ENCODE measurements at regions of chr12 and their contacts with region 1.

Region 1: DNA sequence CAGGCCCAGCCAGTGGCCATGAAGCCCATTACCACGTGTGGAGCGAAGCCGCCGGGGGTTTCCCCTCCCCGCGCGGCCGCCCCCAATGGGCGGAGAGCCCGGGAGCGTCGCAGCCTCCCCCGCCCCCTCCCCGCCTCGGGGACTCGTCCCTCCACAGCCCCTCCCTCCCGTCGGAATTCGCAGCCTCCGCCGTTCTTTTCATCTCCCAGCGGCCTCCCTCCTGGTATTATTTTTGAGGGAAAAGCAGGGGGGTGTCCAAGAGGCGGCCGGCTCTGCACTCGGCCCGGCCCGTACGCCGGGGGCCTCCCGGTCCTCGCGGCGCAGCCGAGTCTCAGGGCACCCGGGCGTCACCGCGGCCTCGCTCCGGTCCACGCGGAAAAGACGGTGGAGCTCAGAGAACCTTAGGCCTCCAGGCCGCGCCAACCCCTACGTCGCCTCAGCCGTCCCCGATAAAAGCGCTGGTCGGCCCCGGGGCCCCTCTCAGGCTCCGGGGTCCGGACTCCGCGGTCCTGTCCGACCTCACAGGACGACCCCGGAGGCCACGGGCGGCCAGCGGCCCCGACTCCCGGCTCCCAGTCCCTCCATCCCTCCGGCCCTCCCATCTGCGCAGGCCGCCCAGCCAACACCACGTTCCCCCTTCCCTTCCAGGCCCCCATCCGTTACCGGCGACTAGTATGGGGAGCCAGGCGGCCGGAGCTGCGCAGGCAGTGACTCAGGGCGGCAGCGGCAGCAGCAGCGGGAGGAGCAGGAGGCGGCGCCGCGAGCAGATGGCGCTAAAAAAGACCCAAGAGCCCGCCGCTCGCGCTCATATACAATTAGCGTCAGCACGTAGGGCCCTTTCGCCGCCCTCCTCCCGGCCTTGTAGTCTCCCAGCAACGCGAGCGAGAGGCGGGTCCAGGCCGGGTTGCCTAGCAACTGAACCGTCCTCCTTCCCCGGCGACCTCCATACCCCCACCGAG is at the start of gene NAP1L1:
- DNase-seq: peak; percentile 94 to 98
- ATAC-seq: peak; percentile 78 to 92 (median 82)
- H3K4me3 ChIP-seq: peak within 1 kb of the TSS; percentile 82
- H3K4me3 Mint-ChIP-seq: peak within 1 kb of the TSS; percentile 98
- H3K27ac ChIP-seq: peak within 1 kb of the TSS; percentile 99
- H3K27ac Mint-ChIP-seq: peak within 1 kb of the TSS; percentile 96 to 99
- H3K4me1 ChIP-seq: peaks cover 11% of the 10 kb centered on the region
- H3K4me1 Mint-ChIP-seq: peaks cover 43 to 49% of the 10 kb centered on the region in 2 donors
- H3K27me3 ChIP-seq: no peaks in the 10 kb centered on the region
- H3K27me3 Mint-ChIP-seq: no peaks in the 10 kb centered on the region
- CTCF ChIP-seq: no peak
- total RNA-seq, gene NAP1L1: 264 to 431 (median 286) TPM

Region 2: GRCh38 chr12:75511116-75512048 is 572.8 kb before region 1 on chr12 and contains the start of gene KRR1:
- intact Hi-C with region 1: loop called (anchors 5 kb)
- DNase-seq: peak; percentile 75 to 98
- ATAC-seq: peak; percentile 96 to 97 (median 96)
- H3K4me3 ChIP-seq: peak within 1 kb of the TSS; percentile 81
- H3K4me3 Mint-ChIP-seq: peak within 1 kb of the TSS; percentile 99
- H3K27ac ChIP-seq: peak within 1 kb of the TSS; percentile 80
- H3K27ac Mint-ChIP-seq: peak within 1 kb of the TSS; percentile 98
- H3K4me1 ChIP-seq: peaks cover 4% of the 10 kb centered on the region
- H3K4me1 Mint-ChIP-seq: peaks cover 22 to 30% of the 10 kb centered on the region in 2 donors
- H3K27me3 ChIP-seq: peaks cover 2% of the 10 kb centered on the region
- H3K27me3 Mint-ChIP-seq: no peaks in the 10 kb centered on the region
- CTCF ChIP-seq: no peak
- total RNA-seq, gene KRR1: 101 to 112 (median 106) TPM

Region 3: GRCh38 chr12:75868501-75868900 is 215.7 kb before region 1 on chr12:
- intact Hi-C with region 1: no loop called
- DNase-seq: no peak
- ATAC-seq: no peak
- H3K4me3 ChIP-seq: no peak overlapping the region
- H3K4me3 Mint-ChIP-seq: no peak overlapping the region
- H3K27ac ChIP-seq: no peak overlapping the region
- H3K27ac Mint-ChIP-seq: no peak overlapping the region
- H3K4me1 ChIP-seq: no peaks in the 10 kb centered on the region
- H3K4me1 Mint-ChIP-seq: peaks cover 0 to 8% of the 10 kb centered on the region in 2 donors
- H3K27me3 ChIP-seq: no peaks in the 10 kb centered on the region
- H3K27me3 Mint-ChIP-seq: peaks cover 11 to 12% of the 10 kb centered on the region in 2 donors
- CTCF ChIP-seq: no peak

Region 4: DNA sequence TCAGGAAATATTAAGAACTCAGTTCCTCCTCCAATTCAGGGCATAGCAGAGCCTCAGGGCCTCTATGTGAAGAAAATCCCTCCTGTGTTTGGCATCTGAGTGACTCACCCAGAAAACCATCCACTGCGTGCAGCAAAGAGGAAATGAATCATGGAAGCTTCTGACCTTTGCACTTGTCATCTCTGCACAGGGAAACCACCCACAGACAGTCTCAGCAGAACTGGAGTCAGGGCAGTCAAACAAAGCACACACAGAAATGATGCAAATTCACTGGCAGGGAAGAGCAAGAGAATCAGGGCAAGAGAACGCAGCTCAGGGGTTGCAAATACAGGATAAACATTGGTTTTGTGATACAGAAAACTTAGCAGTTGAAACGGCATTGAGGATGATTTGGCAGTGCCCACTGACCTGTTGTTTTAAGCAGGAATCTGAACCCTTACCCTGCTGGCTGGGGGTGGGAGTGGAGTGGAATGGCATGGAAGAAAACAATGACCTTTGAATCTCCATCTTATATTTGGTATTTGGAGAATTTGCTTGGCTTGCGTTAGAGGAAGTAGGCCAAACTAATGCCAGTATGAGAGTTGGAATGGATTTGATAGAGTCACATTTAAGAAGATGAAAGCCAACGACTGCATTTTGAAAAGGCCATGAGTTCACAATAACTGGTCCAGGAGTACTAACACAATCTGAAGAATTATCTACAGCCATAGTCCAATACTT is 106.1 kb before region 1 on chr12:
- intact Hi-C with region 1: loop called (anchors 1 kb)
- DNase-seq: peak; percentile 63 to 91
- ATAC-seq: peak; percentile 88 to 98 (median 97)
- H3K4me3 ChIP-seq: no peak overlapping the region
- H3K4me3 Mint-ChIP-seq: peak overlapping the region; percentile 17
- H3K27ac ChIP-seq: peak overlapping the region; percentile 93
- H3K27ac Mint-ChIP-seq: peak overlapping the region; percentile 88 to 94
- H3K4me1 ChIP-seq: peaks cover 24% of the 10 kb centered on the region
- H3K4me1 Mint-ChIP-seq: peaks cover 22 to 31% of the 10 kb centered on the region in 2 donors
- H3K27me3 ChIP-seq: no peaks in the 10 kb centered on the region
- H3K27me3 Mint-ChIP-seq: no peaks in the 10 kb centered on the region
- CTCF ChIP-seq: no peak

Region 5: DNA sequence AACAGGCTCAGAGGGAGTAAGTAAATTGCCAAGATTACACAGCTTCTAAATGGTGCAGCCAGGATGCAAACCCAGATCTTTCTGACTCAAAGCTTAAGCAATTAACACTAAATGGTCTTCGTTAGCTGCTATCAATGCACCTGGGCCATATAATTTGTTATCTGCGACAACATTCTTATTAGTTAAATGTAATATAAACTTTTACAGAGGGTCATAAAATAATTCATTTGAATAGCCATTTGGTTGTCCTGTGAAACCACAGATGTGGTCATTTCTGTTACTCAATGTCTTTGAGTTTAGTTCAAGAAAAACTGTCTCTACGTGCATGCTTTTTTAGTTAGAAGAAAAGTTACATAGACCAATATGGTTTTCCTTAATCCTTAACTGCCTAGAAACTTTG is 22.4 kb after region 1 on chr12:
- intact Hi-C with region 1: no loop called
- DNase-seq: no peak
- ATAC-seq: no peak
- H3K4me3 ChIP-seq: no peak overlapping the region
- H3K4me3 Mint-ChIP-seq: no peak overlapping the region
- H3K27ac ChIP-seq: no peak overlapping the region
- H3K27ac Mint-ChIP-seq: no peak overlapping the region
- H3K4me1 ChIP-seq: no peaks in the 10 kb centered on the region
- H3K4me1 Mint-ChIP-seq: no peaks in the 10 kb centered on the region
- H3K27me3 ChIP-seq: no peaks in the 10 kb centered on the region
- H3K27me3 Mint-ChIP-seq: peaks cover 0 to 4% of the 10 kb centered on the region in 2 donors
- CTCF ChIP-seq: no peak

Region 6: GRCh38 chr12:76158518-76159321 is 74.5 kb after region 1 on chr12:
- intact Hi-C with region 1: loop called (anchors 2 kb)
- DNase-seq: peak; percentile 61 to 75
- ATAC-seq: peak; percentile 93 to 98 (median 94)
- H3K4me3 ChIP-seq: peak overlapping the region; percentile 23
- H3K4me3 Mint-ChIP-seq: peak overlapping the region; percentile 83
- H3K27ac ChIP-seq: peak overlapping the region; percentile 46
- H3K27ac Mint-ChIP-seq: peak overlapping the region; percentile 78 to 92
- H3K4me1 ChIP-seq: peaks cover 5% of the 10 kb centered on the region
- H3K4me1 Mint-ChIP-seq: peaks cover 14 to 18% of the 10 kb centered on the region in 2 donors
- H3K27me3 ChIP-seq: no peaks in the 10 kb centered on the region
- H3K27me3 Mint-ChIP-seq: no peaks in the 10 kb centered on the region
- CTCF ChIP-seq: peak; percentile 41

Region 7: GRCh38 chr12:76348079-76348901 is 264.1 kb after region 1 on chr12 and contains the start of gene BBS10:
- intact Hi-C with region 1: loop called (anchors 5 kb)
- DNase-seq: peak; percentile 74 to 92
- ATAC-seq: peak; percentile 97 to 99 (median 97)
- H3K4me3 ChIP-seq: peak within 1 kb of the TSS; percentile 65
- H3K4me3 Mint-ChIP-seq: peak within 1 kb of the TSS; percentile 93
- H3K27ac ChIP-seq: peak within 1 kb of the TSS; percentile 89
- H3K27ac Mint-ChIP-seq: peak within 1 kb of the TSS; percentile 84 to 91
- H3K4me1 ChIP-seq: peaks cover 9% of the 10 kb centered on the region
- H3K4me1 Mint-ChIP-seq: peaks cover 19 to 20% of the 10 kb centered on the region in 2 donors
- H3K27me3 ChIP-seq: no peaks in the 10 kb centered on the region
- H3K27me3 Mint-ChIP-seq: no peaks in the 10 kb centered on the region
- CTCF ChIP-seq: peak; percentile 36
- total RNA-seq, gene BBS10: 2.8 to 4.0 (median 3.3) TPM

Region 8: DNA sequence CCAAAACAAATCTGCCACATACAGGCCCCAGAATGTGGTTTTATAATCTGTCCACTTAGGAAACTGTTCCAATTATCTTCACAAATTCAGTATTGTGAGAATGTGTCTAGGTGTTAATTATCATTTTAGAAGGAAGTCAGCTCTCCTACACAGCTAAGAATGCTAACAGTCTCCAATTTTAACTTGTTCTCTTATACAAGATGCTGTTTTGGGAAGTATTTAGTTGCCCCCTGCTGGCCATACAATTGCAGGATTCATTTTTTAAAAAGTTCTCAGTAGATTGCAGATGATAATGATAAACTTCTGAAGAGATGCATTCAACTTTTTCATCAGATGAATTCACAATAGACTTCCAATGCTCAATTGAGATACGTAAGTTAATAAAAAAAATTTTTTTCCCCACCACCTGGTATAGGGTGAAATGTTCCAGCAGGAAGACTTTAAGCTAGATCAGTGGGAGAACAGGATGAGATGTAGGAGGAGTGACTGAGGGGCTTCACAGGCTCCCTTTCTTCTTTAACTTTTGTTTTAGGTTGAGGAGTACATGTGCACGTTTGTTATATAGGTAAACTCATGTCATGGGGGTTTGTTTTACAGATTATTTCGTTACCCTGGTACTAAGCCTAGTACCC is 502.7 kb after region 1 on chr12:
- intact Hi-C with region 1: loop called (anchors 2 kb)
- DNase-seq: peak in 1 of 2 donors; percentile 76
- ATAC-seq: peak; percentile 49 to 57 (median 54)
- H3K4me3 ChIP-seq: no peak overlapping the region
- H3K4me3 Mint-ChIP-seq: no peak overlapping the region
- H3K27ac ChIP-seq: no peak overlapping the region
- H3K27ac Mint-ChIP-seq: peak overlapping the region in 1 of 2 donors; percentile 59
- H3K4me1 ChIP-seq: peaks cover 7% of the 10 kb centered on the region
- H3K4me1 Mint-ChIP-seq: peaks cover 12 to 30% of the 10 kb centered on the region in 2 donors
- H3K27me3 ChIP-seq: no peaks in the 10 kb centered on the region
- H3K27me3 Mint-ChIP-seq: no peaks in the 10 kb centered on the region
- CTCF ChIP-seq: peak; percentile 72

Region 9: GRCh38 chr12:76763743-76764675 is 679.8 kb after region 1 on chr12 and contains the start of gene ZDHHC17:
- intact Hi-C with region 1: loop called (anchors 1 kb)
- DNase-seq: peak; percentile 88 to 95
- ATAC-seq: peak; percentile 85 to 94 (median 85)
- H3K4me3 ChIP-seq: peak within 1 kb of the TSS; percentile 93
- H3K4me3 Mint-ChIP-seq: peak within 1 kb of the TSS; percentile 94
- H3K27ac ChIP-seq: peak within 1 kb of the TSS; percentile 96
- H3K27ac Mint-ChIP-seq: peak within 1 kb of the TSS; percentile 90 to 96
- H3K4me1 ChIP-seq: peaks cover 13% of the 10 kb centered on the region
- H3K4me1 Mint-ChIP-seq: peaks cover 40 to 42% of the 10 kb centered on the region in 2 donors
- H3K27me3 ChIP-seq: no peaks in the 10 kb centered on the region
- H3K27me3 Mint-ChIP-seq: peaks cover 0 to 4% of the 10 kb centered on the region in 2 donors
- CTCF ChIP-seq: no peak
- total RNA-seq, gene ZDHHC17: 55.2 to 63.9 (median 58.4) TPM

Measured in natural killer cell (primary cell).